ENCODE measurements at regions of chr14 and their contacts with region 1.

Region 1: GRCh38 chr14:32076278-32077080 is 625 bp upstream of the ARHGAP5 start:
- DNase-seq: peak; percentile 61 to 84 (median 76)
- ATAC-seq: peak; percentile 77
- H3K4me3 ChIP-seq: peak overlapping the region; percentile 99
- H3K4me3 Mint-ChIP-seq: peak overlapping the region; percentile 85 to 100 (median 99)
- H3K27ac ChIP-seq: peak overlapping the region; percentile 71
- H3K27ac Mint-ChIP-seq: peak overlapping the region; percentile 88 to 99 (median 96)
- H3K4me1 ChIP-seq: peaks cover 0 to 4% of the 10 kb centered on the region in 2 donors
- H3K4me1 Mint-ChIP-seq: peaks cover 24 to 51% (median 42%) of the 10 kb centered on the region in 7 donors
- H3K27me3 ChIP-seq: peaks cover 0 to 6% of the 10 kb centered on the region in 2 donors
- H3K27me3 Mint-ChIP-seq: peaks cover 0 to 21% (median 0%) of the 10 kb centered on the region in 5 donors

Region 2: GRCh38 chr14:30621940-30622830 is 1454.3 kb before region 1 on chr14 and contains the start of gene SCFD1:
- CTCF ChIA-PET with region 1: no interaction called
- POLR2A ChIA-PET with region 1: no interaction called
- intact Hi-C with region 1: loop called (anchors 1 to 10 kb)
- DNase-seq: peak; percentile 86 to 94 (median 91)
- ATAC-seq: peak; percentile 99
- H3K4me3 ChIP-seq: peak within 1 kb of the TSS; percentile 97
- H3K4me3 Mint-ChIP-seq: peak within 1 kb of the TSS; percentile 95 to 100 (median 97)
- H3K27ac ChIP-seq: peak within 1 kb of the TSS; percentile 86
- H3K27ac Mint-ChIP-seq: peak within 1 kb of the TSS; percentile 86 to 98 (median 95)
- H3K4me1 ChIP-seq: peaks cover 14 to 26% of the 10 kb centered on the region in 2 donors
- H3K4me1 Mint-ChIP-seq: peaks cover 14 to 58% (median 44%) of the 10 kb centered on the region in 7 donors
- H3K27me3 ChIP-seq: no peaks in the 10 kb centered on the region
- H3K27me3 Mint-ChIP-seq: no peaks in the 10 kb centered on the region
- total RNA-seq, gene SCFD1: 63.2 to 75.4 (median 68.2) TPM

Region 3: GRCh38 chr14:31456841-31457664 is 619.4 kb before region 1 on chr14 and contains the start of gene DTD2:
- CTCF ChIA-PET with region 1: no interaction called
- POLR2A ChIA-PET with region 1: interaction called, 3 read pairs
- intact Hi-C with region 1: loop called (anchors 1 to 5 kb)
- DNase-seq: peak; percentile 80 to 89 (median 86)
- ATAC-seq: peak; percentile 99
- H3K4me3 ChIP-seq: peak within 1 kb of the TSS; percentile 82
- H3K4me3 Mint-ChIP-seq: peak within 1 kb of the TSS; percentile 92 to 98 (median 96)
- H3K27ac ChIP-seq: peak within 1 kb of the TSS; percentile 77
- H3K27ac Mint-ChIP-seq: peak within 1 kb of the TSS; percentile 89 to 98 (median 95)
- H3K4me1 ChIP-seq: peaks cover 6% of the 10 kb centered on the region in 2 donors
- H3K4me1 Mint-ChIP-seq: peaks cover 14 to 48% (median 40%) of the 10 kb centered on the region in 7 donors
- H3K27me3 ChIP-seq: no peaks in the 10 kb centered on the region
- H3K27me3 Mint-ChIP-seq: peaks cover 0 to 5% (median 0%) of the 10 kb centered on the region in 5 donors
- total RNA-seq, gene DTD2: 13.4 to 20.2 (median 18.6) TPM

Region 4: GRCh38 chr14:31937721-31938346 is 138.6 kb before region 1 on chr14:
- CTCF ChIA-PET with region 1: interaction called, 11 read pairs
- POLR2A ChIA-PET with region 1: interaction called, 22 read pairs
- intact Hi-C with region 1: loop called in 1 of 2 experiments (anchors 1 kb)
- DNase-seq: peak in 3 of 9 donors; percentile 10 to 66 (median 27)
- ATAC-seq: peak; percentile 92
- H3K4me3 ChIP-seq: no peak overlapping the region
- H3K4me3 Mint-ChIP-seq: no peak overlapping the region
- H3K27ac ChIP-seq: no peak overlapping the region
- H3K27ac Mint-ChIP-seq: peak overlapping the region in 4 of 9 donors; percentile 40 to 65 (median 54)
- H3K4me1 ChIP-seq: no peaks in the 10 kb centered on the region
- H3K4me1 Mint-ChIP-seq: peaks cover 4 to 29% (median 10%) of the 10 kb centered on the region in 7 donors
- H3K27me3 ChIP-seq: no peaks in the 10 kb centered on the region
- H3K27me3 Mint-ChIP-seq: no peaks in the 10 kb centered on the region

Region 5: DNA sequence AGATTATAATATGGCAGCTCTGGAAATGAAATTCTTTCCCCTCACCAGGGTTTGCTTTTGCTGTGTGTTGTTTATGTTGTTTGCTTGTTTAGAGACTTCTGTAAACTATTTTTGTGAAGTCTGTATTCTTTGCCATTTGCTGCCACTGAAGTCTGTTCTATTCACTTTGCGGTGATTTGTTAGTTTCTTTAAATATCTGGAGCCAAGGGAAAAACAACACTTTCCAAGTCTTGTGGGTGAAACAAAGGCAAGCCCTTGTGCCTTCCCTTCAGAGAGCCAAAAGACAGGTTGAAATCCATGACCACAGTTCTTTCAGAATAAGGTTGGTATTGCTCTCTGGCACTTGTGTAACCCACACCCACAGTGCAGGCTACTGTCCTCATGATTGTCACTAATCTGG is 65.9 kb after region 1 on chr14:
- CTCF ChIA-PET with region 1: no interaction called
- POLR2A ChIA-PET with region 1: no interaction called
- intact Hi-C with region 1: loop called in 1 of 2 experiments (anchors 5 kb)
- DNase-seq: no peak
- ATAC-seq: no peak
- H3K4me3 ChIP-seq: no peak overlapping the region
- H3K4me3 Mint-ChIP-seq: no peak overlapping the region
- H3K27ac ChIP-seq: no peak overlapping the region
- H3K27ac Mint-ChIP-seq: no peak overlapping the region
- H3K4me1 ChIP-seq: no peaks in the 10 kb centered on the region
- H3K4me1 Mint-ChIP-seq: peaks cover 0 to 18% (median 5%) of the 10 kb centered on the region in 7 donors
- H3K27me3 ChIP-seq: no peaks in the 10 kb centered on the region
- H3K27me3 Mint-ChIP-seq: no peaks in the 10 kb centered on the region

Region 6: DNA sequence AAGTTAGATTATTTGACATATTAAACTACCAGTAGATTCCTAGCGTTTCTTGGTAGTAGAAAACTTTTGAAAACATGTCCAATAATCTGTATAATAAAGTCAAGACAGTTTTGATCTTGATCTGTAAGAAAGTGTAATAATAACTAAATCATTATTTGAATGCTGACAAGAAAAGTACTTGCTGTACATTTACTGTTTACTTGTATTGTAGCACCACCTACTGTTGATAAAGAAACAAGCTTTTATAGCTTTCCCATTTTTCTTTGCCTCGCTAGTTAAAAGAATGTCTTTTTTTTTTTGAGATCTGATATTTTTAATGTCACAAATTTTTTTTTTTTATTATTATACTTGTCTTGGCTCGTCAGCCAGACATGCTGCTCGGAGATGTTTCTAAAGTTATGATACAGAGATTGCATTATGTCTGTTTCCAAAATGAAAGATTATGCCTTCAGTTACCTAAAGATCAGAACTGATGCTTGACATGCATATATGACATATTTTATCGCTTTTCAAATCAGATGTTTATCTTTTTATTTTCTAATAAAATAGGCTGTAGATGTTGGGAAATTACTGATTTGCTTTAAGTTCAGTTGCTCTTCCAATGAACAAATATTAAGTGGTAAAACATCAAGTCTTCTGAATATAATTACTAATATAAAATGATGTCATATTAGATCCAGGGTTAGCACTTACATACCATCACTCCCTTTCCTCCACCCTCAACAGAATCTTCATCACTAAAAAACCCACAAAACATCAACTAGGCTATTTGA is 393.1 kb after region 1 on chr14:
- CTCF ChIA-PET with region 1: no interaction called
- POLR2A ChIA-PET with region 1: no interaction called
- intact Hi-C with region 1: loop called in 1 of 2 experiments (anchors 2 kb)
- DNase-seq: peak in 3 of 9 donors; percentile 1 to 4 (median 3)
- ATAC-seq: no peak
- H3K4me3 ChIP-seq: no peak overlapping the region
- H3K4me3 Mint-ChIP-seq: no peak overlapping the region
- H3K27ac ChIP-seq: no peak overlapping the region
- H3K27ac Mint-ChIP-seq: no peak overlapping the region
- H3K4me1 ChIP-seq: no peaks in the 10 kb centered on the region
- H3K4me1 Mint-ChIP-seq: no peaks in the 10 kb centered on the region
- H3K27me3 ChIP-seq: no peaks in the 10 kb centered on the region
- H3K27me3 Mint-ChIP-seq: peaks cover 0 to 8% (median 0%) of the 10 kb centered on the region in 5 donors